CD8-positive, alpha-beta memory T cell (primary cell): ENCODE measurements at regions of chr12 and their contacts with region 1.

Region 1: GRCh38 chr12:13211859-13212664 is 15.5 kb downstream of the EMP1 start:
- DNase-seq: peak; percentile 50 to 78 (median 64)
- H3K4me3 ChIP-seq: no peak overlapping the region
- H3K4me3 Mint-ChIP-seq: peak overlapping the region in 4 of 7 donors; percentile 6 to 63 (median 16)
- H3K27ac ChIP-seq: no peak overlapping the region
- H3K27ac Mint-ChIP-seq: peak overlapping the region in 4 of 8 donors; percentile 2 to 69 (median 20)
- H3K4me1 ChIP-seq: peaks cover 4% of the 10 kb centered on the region
- H3K4me1 Mint-ChIP-seq: peaks cover 3 to 7% (median 6%) of the 10 kb centered on the region in 3 donors
- H3K27me3 ChIP-seq: no peaks in the 10 kb centered on the region
- H3K27me3 Mint-ChIP-seq: peaks cover 4 to 8% of the 10 kb centered on the region in 2 donors

Region 2: GRCh38 chr12:12916135-12916944 is 295.7 kb before region 1 on chr12:
- CTCF ChIA-PET with region 1: interaction called, 88 read pairs
- POLR2A ChIA-PET with region 1: no interaction called
- DNase-seq: peak; percentile 68 to 87 (median 73)
- H3K4me3 ChIP-seq: no peak overlapping the region
- H3K4me3 Mint-ChIP-seq: no peak overlapping the region
- H3K27ac ChIP-seq: no peak overlapping the region
- H3K27ac Mint-ChIP-seq: no peak overlapping the region
- H3K4me1 ChIP-seq: peaks cover 5% of the 10 kb centered on the region
- H3K4me1 Mint-ChIP-seq: peaks cover 5 to 9% (median 8%) of the 10 kb centered on the region in 3 donors
- H3K27me3 ChIP-seq: no peaks in the 10 kb centered on the region
- H3K27me3 Mint-ChIP-seq: peaks cover 22 to 28% of the 10 kb centered on the region in 2 donors

Region 3: DNA sequence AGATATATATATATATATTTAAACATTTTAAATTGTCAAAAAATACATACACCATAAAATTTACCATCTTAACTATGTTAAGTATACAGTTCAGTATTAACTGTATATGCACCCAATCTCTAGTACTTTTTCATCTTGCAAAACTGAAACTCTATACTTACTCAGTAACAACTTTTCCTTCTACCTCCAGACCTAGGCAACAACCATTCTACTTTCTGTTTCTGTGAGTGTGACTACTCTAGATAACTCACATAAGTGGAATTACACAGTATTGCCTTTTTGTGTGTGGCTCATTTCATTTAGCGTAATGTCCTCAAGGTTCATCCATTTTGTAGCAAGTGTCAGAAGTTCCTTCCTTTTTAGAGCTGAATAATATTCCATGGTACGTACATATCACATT is 159.6 kb before region 1 on chr12:
- CTCF ChIA-PET with region 1: no interaction called
- POLR2A ChIA-PET with region 1: no interaction called
- DNase-seq: no peak
- H3K4me3 ChIP-seq: no peak overlapping the region
- H3K4me3 Mint-ChIP-seq: no peak overlapping the region
- H3K27ac ChIP-seq: no peak overlapping the region
- H3K27ac Mint-ChIP-seq: no peak overlapping the region
- H3K4me1 ChIP-seq: no peaks in the 10 kb centered on the region
- H3K4me1 Mint-ChIP-seq: no peaks in the 10 kb centered on the region
- H3K27me3 ChIP-seq: no peaks in the 10 kb centered on the region
- H3K27me3 Mint-ChIP-seq: no peaks in the 10 kb centered on the region

Region 4: DNA sequence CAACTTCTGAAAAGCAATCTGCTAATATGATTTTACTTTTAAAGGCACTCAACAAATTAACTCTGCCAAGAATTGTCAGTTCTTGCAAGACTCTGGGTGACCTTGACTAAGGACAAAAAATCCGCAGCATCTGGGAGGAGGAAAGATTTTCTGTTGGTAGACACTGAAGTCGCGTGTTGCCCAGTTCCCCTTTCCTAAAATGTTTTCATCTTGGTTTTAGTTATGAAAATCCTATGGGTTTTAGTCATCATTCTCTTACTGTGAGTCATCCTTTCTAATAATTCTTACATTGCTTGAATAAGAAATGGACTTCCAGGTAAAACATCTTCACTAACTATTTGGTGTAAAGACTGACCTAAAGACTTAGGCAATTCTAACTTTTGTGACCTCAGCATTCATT is 117.7 kb before region 1 on chr12:
- CTCF ChIA-PET with region 1: interaction called, 75 read pairs
- POLR2A ChIA-PET with region 1: no interaction called
- DNase-seq: no peak
- H3K4me3 ChIP-seq: no peak overlapping the region
- H3K4me3 Mint-ChIP-seq: no peak overlapping the region
- H3K27ac ChIP-seq: no peak overlapping the region
- H3K27ac Mint-ChIP-seq: no peak overlapping the region
- H3K4me1 ChIP-seq: peaks cover 10% of the 10 kb centered on the region
- H3K4me1 Mint-ChIP-seq: peaks cover 13 to 18% (median 17%) of the 10 kb centered on the region in 3 donors
- H3K27me3 ChIP-seq: no peaks in the 10 kb centered on the region
- H3K27me3 Mint-ChIP-seq: peaks cover 0 to 14% of the 10 kb centered on the region in 2 donors

Region 5: DNA sequence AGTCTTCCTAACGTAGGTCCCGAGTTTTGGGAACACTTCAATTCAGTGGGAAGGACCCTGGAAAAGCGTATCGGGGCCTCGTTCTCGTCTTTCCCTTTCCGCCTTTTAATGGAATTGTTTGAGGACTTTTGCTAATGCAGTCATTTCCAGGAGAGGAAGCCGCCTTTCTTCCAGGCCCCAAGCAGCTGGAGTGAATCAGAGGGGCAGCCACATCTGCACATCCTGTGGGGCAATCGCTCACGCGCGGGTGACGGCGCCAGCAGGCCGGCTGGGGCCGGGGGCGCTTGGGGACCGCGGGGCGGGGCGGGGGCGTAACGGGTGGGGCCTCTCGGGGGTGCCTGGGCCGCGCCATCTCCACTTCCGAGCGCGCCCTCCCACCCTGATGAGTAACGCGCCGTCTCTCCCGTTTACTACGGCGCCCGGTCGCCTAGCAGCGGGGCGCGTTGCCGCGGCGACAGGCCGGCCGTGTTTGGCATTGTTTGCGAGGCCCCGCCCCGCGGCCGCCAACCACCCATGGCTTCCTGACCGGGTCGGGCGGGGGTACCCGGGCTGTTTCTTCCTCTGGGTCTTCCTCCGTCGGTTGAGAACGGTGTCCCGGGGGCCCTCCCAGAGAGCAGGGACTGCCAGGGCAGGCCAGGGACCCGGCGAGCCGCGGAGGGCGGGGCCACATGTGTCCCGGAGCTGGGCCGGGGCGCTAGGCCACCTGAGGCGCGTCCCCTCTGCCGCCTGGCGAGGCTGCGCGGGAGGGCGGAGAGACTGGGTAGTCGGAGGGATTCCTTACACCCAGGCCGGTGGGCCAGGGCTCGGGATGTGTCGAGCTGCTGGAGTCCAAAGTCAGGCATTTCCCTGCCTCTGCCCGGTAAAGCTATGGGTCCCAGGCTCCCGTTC is 110.9 kb before region 1 on chr12:
- CTCF ChIA-PET with region 1: interaction called, 75 read pairs
- POLR2A ChIA-PET with region 1: interaction called, 3 read pairs
- DNase-seq: peak; percentile 88 to 98 (median 95)
- H3K4me3 ChIP-seq: peak overlapping the region; percentile 64
- H3K4me3 Mint-ChIP-seq: peak overlapping the region; percentile 80 to 93 (median 88)
- H3K27ac ChIP-seq: peak overlapping the region; percentile 91
- H3K27ac Mint-ChIP-seq: peak overlapping the region; percentile 92 to 98 (median 96)
- H3K4me1 ChIP-seq: peaks cover 26% of the 10 kb centered on the region
- H3K4me1 Mint-ChIP-seq: peaks cover 38 to 53% (median 42%) of the 10 kb centered on the region in 3 donors
- H3K27me3 ChIP-seq: no peaks in the 10 kb centered on the region
- H3K27me3 Mint-ChIP-seq: peaks cover 0 to 4% of the 10 kb centered on the region in 2 donors

Region 6: DNA sequence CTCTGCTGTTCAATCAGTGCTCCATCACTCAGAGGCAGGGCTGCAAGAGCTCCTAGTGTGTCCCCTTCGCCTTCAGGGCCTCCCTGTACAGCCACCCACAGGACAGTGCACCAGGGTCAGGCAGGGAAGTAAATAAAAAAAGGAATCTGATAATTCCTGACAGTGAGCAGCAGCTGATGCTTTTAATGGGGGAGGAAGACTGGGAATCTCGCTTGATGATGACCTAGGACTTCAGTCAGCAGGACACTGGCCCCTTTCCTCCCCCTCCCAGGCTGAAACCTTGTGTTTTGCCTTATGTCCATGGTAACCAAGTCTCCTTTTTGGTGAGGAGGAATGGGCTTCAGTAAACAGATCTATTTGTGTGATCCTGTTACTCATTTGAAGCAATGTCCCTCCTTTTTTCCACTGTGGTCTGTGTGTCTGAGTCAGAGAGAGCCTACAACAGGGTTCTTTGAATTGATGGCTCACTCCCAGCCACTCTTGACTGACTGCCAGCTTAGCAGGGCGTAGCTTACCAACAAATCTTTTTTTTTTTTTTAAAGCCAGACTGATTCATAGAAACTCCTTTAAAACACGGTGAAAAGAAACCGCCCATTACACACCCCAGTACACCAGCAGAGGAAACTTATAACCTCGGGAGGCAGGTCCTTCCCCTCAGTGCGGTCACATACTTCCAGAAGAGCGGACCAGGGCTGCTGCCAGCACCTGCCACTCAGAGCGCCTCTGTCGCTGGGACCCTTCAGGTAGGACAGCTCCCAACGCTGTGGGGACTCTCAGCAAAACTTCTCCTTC is 15.7 kb before region 1 on chr12 and contains the start of gene EMP1:
- CTCF ChIA-PET with region 1: interaction called, 12 read pairs
- POLR2A ChIA-PET with region 1: no interaction called
- DNase-seq: peak; percentile 20 to 91 (median 46)
- H3K4me3 ChIP-seq: peak within 1 kb of the TSS; percentile 57
- H3K4me3 Mint-ChIP-seq: peak within 1 kb of the TSS; percentile 65 to 89 (median 75)
- H3K27ac ChIP-seq: no peak within 1 kb of the TSS
- H3K27ac Mint-ChIP-seq: peak within 1 kb of the TSS; percentile 12 to 87 (median 50)
- H3K4me1 ChIP-seq: peaks cover 18% of the 10 kb centered on the region
- H3K4me1 Mint-ChIP-seq: peaks cover 17 to 35% (median 18%) of the 10 kb centered on the region in 3 donors
- H3K27me3 ChIP-seq: no peaks in the 10 kb centered on the region
- H3K27me3 Mint-ChIP-seq: peaks cover 4 to 6% of the 10 kb centered on the region in 2 donors
- total RNA-seq, gene EMP1: 9.6 to 12.9 TPM

Region 7: GRCh38 chr12:13241833-13242488 is 29.9 kb after region 1 on chr12:
- CTCF ChIA-PET with region 1: no interaction called
- POLR2A ChIA-PET with region 1: no interaction called
- DNase-seq: no peak
- H3K4me3 ChIP-seq: no peak overlapping the region
- H3K4me3 Mint-ChIP-seq: no peak overlapping the region
- H3K27ac ChIP-seq: no peak overlapping the region
- H3K27ac Mint-ChIP-seq: no peak overlapping the region
- H3K4me1 ChIP-seq: no peaks in the 10 kb centered on the region
- H3K4me1 Mint-ChIP-seq: no peaks in the 10 kb centered on the region
- H3K27me3 ChIP-seq: no peaks in the 10 kb centered on the region
- H3K27me3 Mint-ChIP-seq: peaks cover 4 to 22% of the 10 kb centered on the region in 2 donors